Activated T-helper 2 cell treated with anti-CD3 and anti-CD28 coated beads, Interferon-gamma antibody, Interleukin-2, Interleukin-4, amounts not matched to agents 10 μg/mL and 5 μg/mL and 100 μg/mL, durations not matched to agents 14 hours and 24 hours and 36 hours (primary cell): ENCODE measurements at regions of chr11 and their contacts with region 1.

Region 1: GRCh38 chr11:33893711-33894397 is 2.0 kb upstream of the LMO2 start:
- DNase-seq: peak; percentile 59
- H3K4me3 Mint-ChIP-seq: peak overlapping the region; percentile 16
- H3K27ac Mint-ChIP-seq: peak overlapping the region; percentile 46
- H3K4me1 Mint-ChIP-seq: peaks cover 19% of the 10 kb centered on the region
- H3K27me3 Mint-ChIP-seq: peaks cover 76% of the 10 kb centered on the region

Region 2: GRCh38 chr11:33736148-33736809 is 157.6 kb before region 1 on chr11 and contains the start of gene CD59:
- intact Hi-C with region 1: no loop called
- DNase-seq: peak; percentile 79
- H3K4me3 Mint-ChIP-seq: peak within 1 kb of the TSS; percentile 87
- H3K27ac Mint-ChIP-seq: peak within 1 kb of the TSS; percentile 86
- H3K4me1 Mint-ChIP-seq: peaks cover 35% of the 10 kb centered on the region
- H3K27me3 Mint-ChIP-seq: peaks cover 12% of the 10 kb centered on the region
- total RNA-seq, gene CD59: 165 and 173 TPM in 2 replicates

Region 3: GRCh38 chr11:33869481-33870422 is 24.1 kb before region 1 on chr11:
- intact Hi-C with region 1: loop called (anchors 2 kb)
- DNase-seq: no peak
- H3K4me3 Mint-ChIP-seq: peak overlapping the region; percentile 78
- H3K27ac Mint-ChIP-seq: no peak overlapping the region
- H3K4me1 Mint-ChIP-seq: peaks cover 4% of the 10 kb centered on the region
- H3K27me3 Mint-ChIP-seq: peaks cover 75% of the 10 kb centered on the region

Region 4: DNA sequence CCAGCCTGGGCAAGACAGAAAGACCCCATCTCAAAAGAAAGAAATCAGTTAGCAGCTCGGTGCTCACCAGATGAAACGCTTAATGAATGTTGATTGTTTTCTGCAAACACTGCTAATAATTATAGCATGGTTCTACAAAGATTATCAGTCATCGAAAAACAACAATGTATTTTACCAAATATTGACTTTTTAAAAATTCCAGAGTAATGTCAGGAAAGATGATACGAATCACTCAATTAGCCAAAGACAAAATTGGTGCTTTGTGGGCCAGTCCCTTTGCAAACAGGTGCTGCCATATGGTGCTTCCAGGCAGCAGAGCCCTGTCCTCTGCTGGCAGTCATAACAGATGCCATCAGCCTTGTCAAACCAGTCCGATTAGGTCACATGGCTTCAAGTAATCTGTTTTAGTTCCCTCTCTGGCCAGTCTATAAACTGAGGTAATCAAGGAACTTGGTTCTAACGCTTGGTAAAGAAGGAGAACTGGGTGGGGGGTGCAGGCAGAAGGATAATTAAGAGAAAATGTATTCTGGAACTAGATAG is 108.5 kb after region 1 on chr11:
- intact Hi-C with region 1: no loop called
- DNase-seq: no peak
- H3K4me3 Mint-ChIP-seq: no peak overlapping the region
- H3K27ac Mint-ChIP-seq: no peak overlapping the region
- H3K4me1 Mint-ChIP-seq: peaks cover 5% of the 10 kb centered on the region
- H3K27me3 Mint-ChIP-seq: peaks cover 46% of the 10 kb centered on the region